HepG2 (cell line): ENCODE measurements at regions of chr1 and their contacts with region 1.

Region 1: GRCh38 chr1:202315576-202316168 is 26.1 kb downstream of the UBE2T start:
- DNase-seq: peak; percentile 64
- ATAC-seq: peak; percentile 79
- H3K4me3 ChIP-seq: no peak overlapping the region
- H3K27ac ChIP-seq: no peak overlapping the region
- H3K4me1 ChIP-seq: peaks cover 25% of the 10 kb centered on the region
- H3K27me3 ChIP-seq: peaks cover 1 to 34% of the 10 kb centered on the region in 2 experiments; a peak in 2 of 5 replicates
- CTCF ChIP-seq: peak; percentile 96
- EP300 ChIP-seq: no peak
- POLR2A ChIP-seq: no peak
- RAD21 ChIP-seq: peak; percentile 83

Region 2: DNA sequence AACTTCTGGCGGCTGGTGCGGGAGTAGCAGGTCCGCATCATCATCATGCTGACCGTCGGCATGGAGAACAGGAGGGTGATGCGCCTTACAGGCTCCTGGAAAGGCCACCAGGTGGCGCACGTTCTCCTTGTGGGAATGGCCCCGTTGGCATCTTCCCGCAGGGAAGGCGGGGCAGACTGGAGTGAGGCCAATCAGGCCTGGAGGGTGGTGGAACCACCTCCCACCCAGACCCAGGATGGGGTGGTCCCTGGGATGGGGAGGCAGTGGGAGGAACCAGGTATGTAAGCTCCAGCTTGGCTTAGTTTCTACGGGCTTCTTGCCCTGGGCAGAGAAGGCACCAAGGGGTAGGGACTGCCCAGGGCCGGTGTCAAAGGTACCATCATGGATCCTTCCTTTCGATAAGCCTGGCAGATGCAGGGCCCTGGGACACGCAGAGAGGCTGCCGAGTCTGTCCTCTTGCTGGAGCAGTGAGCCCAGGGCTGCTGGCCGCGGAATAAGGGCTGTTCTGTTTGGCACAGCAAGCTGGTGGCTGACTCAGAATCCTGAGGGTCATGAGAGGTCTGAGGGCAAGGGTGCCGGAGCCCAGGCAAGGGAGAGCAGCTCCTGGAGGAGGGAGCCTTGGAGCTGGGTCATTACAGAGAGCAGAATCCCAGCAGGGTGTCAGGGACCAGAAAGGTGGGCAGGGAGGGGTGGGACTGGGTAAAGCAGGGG is 130.8 kb before region 1 on chr1:
- CTCF ChIA-PET with region 1: interaction called, 15 read pairs
- POLR2A ChIA-PET with region 1: no interaction called
- in situ Hi-C with region 1: loop called (anchors 5 kb)
- intact Hi-C with region 1: no loop called
- DNase-seq: peak; percentile 74
- ATAC-seq: peak; percentile 62
- H3K4me3 ChIP-seq: no peak overlapping the region
- H3K27ac ChIP-seq: no peak overlapping the region
- H3K4me1 ChIP-seq: peaks cover 30% of the 10 kb centered on the region
- H3K27me3 ChIP-seq: peaks cover 5 to 16% of the 10 kb centered on the region in 2 experiments; a peak in 3 of 5 replicates
- CTCF ChIP-seq: peak; percentile 92
- EP300 ChIP-seq: no peak
- POLR2A ChIP-seq: no peak
- RAD21 ChIP-seq: peak; percentile 71

Region 3: GRCh38 chr1:202192770-202193613 is 122.7 kb before region 1 on chr1:
- CTCF ChIA-PET with region 1: interaction called, 15 read pairs
- POLR2A ChIA-PET with region 1: no interaction called
- in situ Hi-C with region 1: loop called (anchors 5 kb)
- intact Hi-C with region 1: loop called (anchors 2 kb)
- DNase-seq: peak; percentile 43
- ATAC-seq: peak; percentile 30
- H3K4me3 ChIP-seq: no peak overlapping the region; a peak in 1 of 6 replicates
- H3K27ac ChIP-seq: no peak overlapping the region
- H3K4me1 ChIP-seq: peaks cover 41% of the 10 kb centered on the region
- H3K27me3 ChIP-seq: peaks cover 11 to 24% of the 10 kb centered on the region in 2 experiments
- CTCF ChIP-seq: peak; percentile 92
- EP300 ChIP-seq: no peak
- POLR2A ChIP-seq: no peak
- RAD21 ChIP-seq: peak; percentile 76

Region 4: GRCh38 chr1:202274611-202275010 is 41.1 kb before region 1 on chr1:
- CTCF ChIA-PET with region 1: interaction called, 7 read pairs
- POLR2A ChIA-PET with region 1: no interaction called
- in situ Hi-C with region 1: no loop called
- intact Hi-C with region 1: loop called (anchors 1 kb)
- DNase-seq: peak; percentile 45
- ATAC-seq: peak; percentile 90
- H3K4me3 ChIP-seq: no peak overlapping the region
- H3K27ac ChIP-seq: no peak overlapping the region
- H3K4me1 ChIP-seq: no peaks in the 10 kb centered on the region
- H3K27me3 ChIP-seq: peaks cover under 1 to 27% of the 10 kb centered on the region in 2 experiments; a peak in 3 of 5 replicates
- CTCF ChIP-seq: peak; percentile 79
- EP300 ChIP-seq: no peak
- POLR2A ChIP-seq: no peak
- RAD21 ChIP-seq: peak; percentile 64

Region 5: DNA sequence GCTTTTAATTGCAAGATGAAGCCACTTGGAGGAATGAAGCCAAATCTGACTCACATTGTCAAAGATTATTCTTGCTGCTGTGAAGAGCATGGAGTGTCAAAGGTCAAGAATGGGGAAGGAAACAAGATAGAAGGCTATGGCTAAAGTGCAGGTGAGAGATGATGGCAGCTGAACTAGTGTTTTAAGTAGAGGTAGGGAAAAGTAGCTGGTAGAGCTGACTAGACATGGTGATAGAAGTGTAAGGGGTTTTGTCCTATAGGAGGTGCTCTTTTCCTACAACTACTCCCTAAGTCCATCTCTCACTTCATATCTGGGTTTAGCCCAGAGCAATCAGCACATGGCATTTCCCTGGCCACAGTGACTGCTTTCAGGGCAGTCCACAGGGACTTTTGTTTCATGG is 14.2 kb after region 1 on chr1:
- CTCF ChIA-PET with region 1: no interaction called
- POLR2A ChIA-PET with region 1: no interaction called
- in situ Hi-C with region 1: no loop called
- intact Hi-C with region 1: no loop called
- DNase-seq: no peak
- ATAC-seq: no peak
- H3K4me3 ChIP-seq: no peak overlapping the region
- H3K27ac ChIP-seq: no peak overlapping the region
- H3K4me1 ChIP-seq: no peaks in the 10 kb centered on the region
- H3K27me3 ChIP-seq: no peaks in the 10 kb centered on the region
- CTCF ChIP-seq: peak; percentile 20; the same call in 1 of the 2 replicates
- EP300 ChIP-seq: no peak
- POLR2A ChIP-seq: no peak
- RAD21 ChIP-seq: no peak

Region 6: GRCh38 chr1:202416641-202417040 is 101.0 kb after region 1 on chr1:
- CTCF ChIA-PET with region 1: no interaction called
- POLR2A ChIA-PET with region 1: no interaction called
- in situ Hi-C with region 1: no loop called
- intact Hi-C with region 1: no loop called
- DNase-seq: no peak
- ATAC-seq: no peak
- H3K4me3 ChIP-seq: no peak overlapping the region
- H3K27ac ChIP-seq: no peak overlapping the region
- H3K4me1 ChIP-seq: no peaks in the 10 kb centered on the region
- H3K27me3 ChIP-seq: no peaks in the 10 kb centered on the region
- CTCF ChIP-seq: no peak
- EP300 ChIP-seq: no peak
- POLR2A ChIP-seq: no peak
- RAD21 ChIP-seq: no peak